ENCODE measurements at regions of chr10 and their contacts with region 1.

Region 1: DNA sequence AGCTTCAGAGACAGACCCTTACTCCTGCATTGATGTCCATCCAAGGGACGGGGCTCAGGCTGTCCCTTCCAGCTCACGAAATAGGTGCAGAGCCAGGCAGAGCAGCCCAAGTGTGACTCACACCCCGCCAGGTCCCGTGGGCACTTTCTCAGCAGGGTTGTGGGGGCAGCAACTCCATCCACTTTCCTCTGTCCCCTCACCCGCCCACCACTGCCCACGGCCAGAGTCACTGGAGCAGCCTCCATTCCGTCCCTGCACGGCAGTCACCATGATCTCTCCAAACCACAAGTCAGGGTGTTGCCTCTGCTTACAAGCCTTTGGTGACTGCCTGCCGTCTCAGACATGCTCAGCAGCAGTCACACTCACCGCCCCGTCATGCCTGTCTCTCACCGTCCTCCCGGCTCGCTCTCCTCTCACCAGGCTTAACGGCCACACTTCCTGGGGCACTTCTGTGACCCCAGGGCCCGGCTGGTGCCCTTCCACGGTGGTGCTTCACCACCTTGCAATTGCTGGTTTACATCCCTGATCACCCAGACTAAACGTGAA is 39.3 kb downstream of the CALML3 start:
- DNase-seq: peak; percentile 25
- H3K4me3 Mint-ChIP-seq: peak overlapping the region; percentile 71
- H3K27ac Mint-ChIP-seq: peak overlapping the region; percentile 85
- H3K4me1 Mint-ChIP-seq: peaks cover 19% of the 10 kb centered on the region
- H3K27me3 Mint-ChIP-seq: peaks cover 4% of the 10 kb centered on the region

Region 2: DNA sequence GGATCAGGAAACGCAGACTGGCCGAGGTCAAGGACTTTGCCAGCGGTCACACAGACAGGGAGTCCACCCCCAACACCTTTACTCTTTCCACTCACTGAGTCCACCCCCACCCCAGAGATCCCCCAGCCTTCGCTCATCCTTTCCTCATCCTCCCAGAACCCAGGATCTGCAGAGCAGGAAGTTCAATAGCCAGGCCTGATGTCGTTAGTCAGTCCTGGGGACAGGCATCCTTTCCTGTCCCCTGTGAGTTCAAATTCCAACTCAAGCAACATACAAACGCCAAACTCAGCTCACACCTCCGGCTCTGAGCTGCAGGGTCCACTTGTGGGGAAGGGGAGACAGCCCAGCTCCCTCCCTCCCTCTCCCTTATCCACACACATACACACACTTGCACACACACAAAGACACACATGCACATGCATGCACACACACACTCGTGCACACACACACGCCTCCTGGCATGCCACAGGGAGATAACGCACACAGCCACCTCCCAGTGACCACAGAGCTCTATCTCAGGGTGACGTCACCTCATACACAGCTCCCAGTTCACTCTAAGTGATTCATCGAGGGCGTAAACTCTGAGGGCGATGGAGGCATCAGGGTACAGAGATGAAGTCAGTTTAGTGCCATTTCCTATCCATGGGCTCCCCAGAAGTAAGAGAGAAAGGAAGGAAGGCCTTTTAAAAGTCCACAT is 15.4 kb before region 1 on chr10:
- intact Hi-C with region 1: loop called (anchors 2 kb)
- DNase-seq: peak; percentile 51
- H3K4me3 Mint-ChIP-seq: no peak overlapping the region
- H3K27ac Mint-ChIP-seq: no peak overlapping the region
- H3K4me1 Mint-ChIP-seq: peaks cover 28% of the 10 kb centered on the region
- H3K27me3 Mint-ChIP-seq: peaks cover 4% of the 10 kb centered on the region

Region 3: GRCh38 chr10:5583525-5584175 is 19.6 kb after region 1 on chr10:
- intact Hi-C with region 1: no loop called
- DNase-seq: no peak
- H3K4me3 Mint-ChIP-seq: no peak overlapping the region
- H3K27ac Mint-ChIP-seq: no peak overlapping the region
- H3K4me1 Mint-ChIP-seq: no peaks in the 10 kb centered on the region
- H3K27me3 Mint-ChIP-seq: peaks cover 12% of the 10 kb centered on the region